Endothelial cell of umbilical vein (primary cell): ENCODE measurements at regions of chr12 and their contacts with region 1.

Region 1: DNA sequence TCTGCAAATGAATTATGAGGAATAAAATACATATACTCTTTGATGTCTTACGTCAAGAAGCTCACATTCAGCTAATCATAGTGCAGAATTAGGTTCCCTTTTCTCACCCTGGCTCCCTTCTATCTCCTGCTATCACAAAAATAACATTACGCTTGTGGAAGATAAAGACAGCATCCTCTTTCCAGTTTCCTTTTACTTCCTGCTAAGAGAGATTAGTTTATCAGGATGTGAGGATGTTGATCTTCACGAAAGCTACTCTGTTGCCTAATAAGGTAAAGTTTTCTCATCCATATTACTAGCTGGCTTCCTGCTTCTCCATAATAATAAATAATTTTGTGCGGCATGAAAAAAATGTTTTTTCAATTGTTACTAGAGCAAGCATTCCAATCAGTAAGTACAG is 217.7 kb upstream of the DCN start:
- DNase-seq: peak; percentile 93
- H3K4me3 ChIP-seq: no peak overlapping the region
- H3K27ac ChIP-seq: peak overlapping the region; percentile 48
- H3K4me1 ChIP-seq: peaks cover 22% of the 10 kb centered on the region
- H3K27me3 ChIP-seq: no peaks in the 10 kb centered on the region
- CTCF ChIP-seq: no peak
- POLR2A ChIP-seq: no peak

Region 2: DNA sequence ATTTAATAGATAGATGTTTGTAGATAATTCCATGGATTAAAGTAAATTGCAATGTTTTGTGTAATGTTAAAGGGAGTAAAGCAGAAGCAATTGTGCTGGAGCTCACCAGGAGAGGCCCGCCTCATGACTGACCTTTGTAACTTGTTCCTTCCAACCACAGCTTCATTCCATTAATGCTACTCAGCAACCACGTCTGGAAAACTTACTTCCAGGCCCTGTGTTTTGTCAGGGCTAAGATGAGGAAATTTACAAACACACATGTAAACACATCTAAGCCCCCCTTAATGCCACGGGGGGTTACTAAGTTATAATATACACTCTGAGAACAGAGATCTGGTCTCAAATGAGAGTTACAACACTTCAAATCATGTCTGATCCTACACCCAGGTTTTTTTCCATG is 301.3 kb before region 1 on chr12:
- CTCF ChIA-PET with region 1: no interaction called
- POLR2A ChIA-PET with region 1: no interaction called
- dilution Hi-C with region 1: no loop called
- intact Hi-C with region 1: no loop called
- DNase-seq: no peak
- H3K4me3 ChIP-seq: no peak overlapping the region
- H3K27ac ChIP-seq: no peak overlapping the region
- H3K4me1 ChIP-seq: no peaks in the 10 kb centered on the region
- H3K27me3 ChIP-seq: no peaks in the 10 kb centered on the region
- CTCF ChIP-seq: no peak
- POLR2A ChIP-seq: no peak

Region 3: GRCh38 chr12:91349476-91349875 is 50.8 kb before region 1 on chr12:
- CTCF ChIA-PET with region 1: no interaction called
- POLR2A ChIA-PET with region 1: no interaction called
- dilution Hi-C with region 1: no loop called
- intact Hi-C with region 1: no loop called
- DNase-seq: no peak
- H3K4me3 ChIP-seq: no peak overlapping the region
- H3K27ac ChIP-seq: no peak overlapping the region
- H3K4me1 ChIP-seq: no peaks in the 10 kb centered on the region
- H3K27me3 ChIP-seq: no peaks in the 10 kb centered on the region
- CTCF ChIP-seq: no peak
- POLR2A ChIP-seq: no peak

Region 4: DNA sequence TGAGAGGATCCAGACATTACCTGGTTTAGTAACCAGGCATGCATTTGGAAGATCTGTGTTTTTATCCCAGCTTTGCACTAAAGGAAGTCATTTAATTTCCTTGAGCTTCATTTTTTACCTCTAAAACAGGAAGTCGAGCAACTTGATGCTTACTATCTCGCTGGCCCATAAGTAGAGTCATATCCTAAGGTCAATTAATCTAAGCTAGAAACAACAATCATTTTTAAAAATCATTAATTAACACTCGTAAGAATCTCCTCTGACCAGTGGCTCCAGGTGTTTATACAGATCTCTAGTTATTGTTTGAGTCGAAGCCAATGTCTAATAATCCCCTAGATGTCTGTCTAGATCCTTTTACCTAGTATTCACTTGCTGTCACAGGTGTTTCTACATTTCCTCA is 138.1 kb after region 1 on chr12:
- CTCF ChIA-PET with region 1: no interaction called
- POLR2A ChIA-PET with region 1: no interaction called
- dilution Hi-C with region 1: no loop called
- intact Hi-C with region 1: loop called (anchors 1 kb)
- DNase-seq: peak; percentile 79
- H3K4me3 ChIP-seq: no peak overlapping the region
- H3K27ac ChIP-seq: no peak overlapping the region
- H3K4me1 ChIP-seq: peaks cover 15% of the 10 kb centered on the region
- H3K27me3 ChIP-seq: no peaks in the 10 kb centered on the region
- CTCF ChIP-seq: no peak
- POLR2A ChIP-seq: peak; percentile 52